Activated CD4-positive, alpha-beta T cell treated with anti-CD3 and anti-CD28 coated beads for 36 hours (primary cell): ENCODE measurements at regions of chr14 and their contacts with region 1.

Region 1: DNA sequence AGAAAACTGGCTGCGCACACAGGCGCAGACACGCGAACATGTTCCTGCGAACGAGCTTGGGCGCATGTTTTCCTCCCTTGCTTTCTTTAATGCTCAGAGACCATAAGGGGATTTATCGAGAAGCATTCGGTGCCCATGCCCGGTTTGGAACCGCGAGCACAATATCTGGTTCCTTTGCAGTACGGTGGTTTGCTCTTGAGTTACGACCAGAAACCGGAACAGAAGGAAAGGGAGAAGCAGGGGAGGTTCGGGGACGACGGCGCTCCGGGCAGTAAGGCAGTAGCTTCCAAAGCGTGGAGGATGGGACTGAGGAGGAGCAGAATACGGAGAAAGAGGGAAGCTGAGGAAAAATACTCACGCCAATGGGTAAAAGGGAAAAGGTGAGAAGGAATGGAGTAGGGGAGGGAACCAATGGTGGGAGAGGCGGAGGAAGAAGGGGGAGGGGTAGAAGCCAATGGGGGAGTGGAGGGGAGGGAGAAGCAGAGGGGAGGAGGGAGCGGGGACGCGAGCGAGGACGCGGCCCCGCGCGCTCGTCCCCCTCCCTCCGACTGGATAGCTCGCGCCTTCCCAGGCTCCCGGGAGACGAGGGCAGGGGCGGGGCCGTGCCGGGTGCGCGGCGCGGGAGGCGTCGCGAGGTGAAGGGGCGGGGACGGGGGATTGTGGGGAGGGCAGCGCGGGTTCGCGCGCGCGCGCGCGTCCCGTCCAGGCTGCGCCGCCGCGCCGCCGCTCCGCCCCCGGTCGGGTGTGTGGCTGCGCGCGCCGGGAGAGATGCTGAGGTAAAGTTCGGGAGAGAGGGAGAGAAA is 625 bp upstream of the ARHGAP5 start:
- DNase-seq: peak; percentile 91
- ATAC-seq: peak; percentile 68
- H3K4me3 Mint-ChIP-seq: peak overlapping the region; percentile 94
- H3K27ac Mint-ChIP-seq: peak overlapping the region; percentile 95
- H3K4me1 Mint-ChIP-seq: peaks cover 31% of the 10 kb centered on the region
- H3K27me3 Mint-ChIP-seq: peaks cover 2% of the 10 kb centered on the region

Region 2: GRCh38 chr14:31127690-31128089 is 948.8 kb before region 1 on chr14:
- CTCF ChIA-PET with region 1: no interaction called
- POLR2A ChIA-PET with region 1: interaction called, 12 read pairs
- intact Hi-C with region 1: no loop called
- DNase-seq: peak; percentile 8
- ATAC-seq: peak; percentile 93
- H3K4me3 Mint-ChIP-seq: no peak overlapping the region
- H3K27ac Mint-ChIP-seq: peak overlapping the region; percentile 1
- H3K4me1 Mint-ChIP-seq: peaks cover 31% of the 10 kb centered on the region
- H3K27me3 Mint-ChIP-seq: no peaks in the 10 kb centered on the region

Region 3: GRCh38 chr14:31456841-31457664 is 619.4 kb before region 1 on chr14 and contains the start of gene DTD2:
- CTCF ChIA-PET with region 1: interaction called, 5 read pairs
- POLR2A ChIA-PET with region 1: no interaction called
- intact Hi-C with region 1: loop called (anchors 2 to 5 kb)
- DNase-seq: peak; percentile 95
- ATAC-seq: peak; percentile 99
- H3K4me3 Mint-ChIP-seq: peak within 1 kb of the TSS; percentile 98
- H3K27ac Mint-ChIP-seq: peak within 1 kb of the TSS; percentile 95
- H3K4me1 Mint-ChIP-seq: peaks cover 22% of the 10 kb centered on the region
- H3K27me3 Mint-ChIP-seq: peaks cover 2% of the 10 kb centered on the region
- total RNA-seq, gene DTD2: 17.5 to 21.6 TPM

Region 4: DNA sequence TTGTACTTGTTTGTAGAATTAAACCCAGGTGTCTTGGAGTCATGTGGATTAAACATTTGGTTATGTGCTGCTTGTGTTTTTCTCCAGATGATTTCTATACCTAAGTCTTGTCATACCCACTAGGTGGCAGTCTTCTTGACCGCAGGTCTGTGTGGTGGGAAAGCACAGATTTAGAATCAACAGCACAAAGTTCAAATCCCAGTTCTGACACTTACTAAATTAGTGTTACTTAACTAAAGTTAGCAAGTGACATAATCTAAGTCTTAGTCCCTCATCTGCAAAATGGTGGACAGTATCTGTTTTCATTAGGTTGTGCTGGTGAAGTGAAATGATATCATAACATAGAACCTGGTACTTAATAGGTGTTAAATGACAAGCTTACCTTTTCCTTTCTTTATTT is 150.4 kb before region 1 on chr14:
- CTCF ChIA-PET with region 1: interaction called, 4 read pairs
- POLR2A ChIA-PET with region 1: interaction called, 3 read pairs
- intact Hi-C with region 1: loop called in 1 of 2 experiments (anchors 2 kb)
- DNase-seq: peak; percentile 49
- ATAC-seq: no peak
- H3K4me3 Mint-ChIP-seq: no peak overlapping the region
- H3K27ac Mint-ChIP-seq: no peak overlapping the region
- H3K4me1 Mint-ChIP-seq: peaks cover 13% of the 10 kb centered on the region
- H3K27me3 Mint-ChIP-seq: no peaks in the 10 kb centered on the region

Region 5: DNA sequence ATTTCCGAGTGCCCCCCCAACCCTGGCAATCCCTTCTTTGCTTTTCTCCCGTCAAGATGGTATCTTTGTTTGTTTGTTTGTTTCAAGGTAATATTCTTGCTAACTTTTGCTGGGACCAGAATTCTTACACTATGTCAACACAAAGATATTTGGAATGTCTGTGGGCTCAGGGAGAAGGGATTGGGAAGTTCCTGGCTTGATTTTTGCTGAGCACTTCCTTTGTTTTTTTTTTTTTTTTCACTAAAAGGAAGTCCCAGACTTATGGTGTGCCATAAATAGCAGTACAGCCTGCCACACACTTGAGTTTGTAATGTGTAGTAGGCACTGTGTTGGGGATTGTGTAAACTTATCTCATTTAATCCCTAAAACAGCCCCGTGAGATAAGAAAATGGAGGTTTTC is 114.2 kb after region 1 on chr14:
- CTCF ChIA-PET with region 1: no interaction called
- POLR2A ChIA-PET with region 1: no interaction called
- intact Hi-C with region 1: loop called (anchors 2 kb)
- DNase-seq: no peak
- ATAC-seq: no peak
- H3K4me3 Mint-ChIP-seq: no peak overlapping the region
- H3K27ac Mint-ChIP-seq: no peak overlapping the region
- H3K4me1 Mint-ChIP-seq: peaks cover 18% of the 10 kb centered on the region
- H3K27me3 Mint-ChIP-seq: peaks cover 9% of the 10 kb centered on the region

Region 6: DNA sequence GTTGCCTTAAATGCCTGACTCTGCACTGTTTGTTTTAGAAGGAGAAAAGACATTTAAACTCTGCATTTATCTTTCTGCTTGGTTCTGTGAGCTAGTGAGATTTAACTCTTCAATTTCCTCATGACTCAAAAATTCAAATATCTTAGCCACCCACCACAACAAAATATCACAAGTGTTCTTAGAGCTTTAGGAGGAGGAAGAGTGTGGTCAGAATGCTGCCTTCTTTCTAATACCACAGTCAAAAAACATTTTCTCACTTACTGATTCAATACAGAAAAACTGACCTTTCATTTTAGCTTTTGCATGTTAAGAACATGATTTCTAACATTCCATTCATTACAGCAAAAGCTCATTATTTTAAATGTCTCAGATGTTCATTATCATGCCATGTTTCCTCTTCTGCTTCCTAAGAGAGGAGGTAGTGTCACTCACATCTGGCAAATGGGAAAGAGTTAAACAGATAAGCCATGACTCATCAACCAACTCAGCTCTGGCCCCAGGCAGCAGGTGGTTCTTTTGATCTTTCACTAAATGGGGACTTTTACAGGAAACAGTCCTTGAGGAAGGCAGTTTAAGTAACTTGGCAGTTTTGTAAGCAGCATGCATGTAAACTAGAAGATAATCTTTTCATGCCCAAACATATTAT is 183.0 kb after region 1 on chr14:
- CTCF ChIA-PET with region 1: interaction called, 81 read pairs
- POLR2A ChIA-PET with region 1: interaction called, 4 read pairs
- intact Hi-C with region 1: no loop called
- DNase-seq: peak; percentile 29
- ATAC-seq: peak; percentile 80
- H3K4me3 Mint-ChIP-seq: no peak overlapping the region
- H3K27ac Mint-ChIP-seq: peak overlapping the region; percentile 28
- H3K4me1 Mint-ChIP-seq: peaks cover 11% of the 10 kb centered on the region
- H3K27me3 Mint-ChIP-seq: peaks cover 3% of the 10 kb centered on the region